Left cardiac atrium (tissue), 4 donors: ENCODE measurements at regions of chr2 and their contacts with region 1.

Region 1: DNA sequence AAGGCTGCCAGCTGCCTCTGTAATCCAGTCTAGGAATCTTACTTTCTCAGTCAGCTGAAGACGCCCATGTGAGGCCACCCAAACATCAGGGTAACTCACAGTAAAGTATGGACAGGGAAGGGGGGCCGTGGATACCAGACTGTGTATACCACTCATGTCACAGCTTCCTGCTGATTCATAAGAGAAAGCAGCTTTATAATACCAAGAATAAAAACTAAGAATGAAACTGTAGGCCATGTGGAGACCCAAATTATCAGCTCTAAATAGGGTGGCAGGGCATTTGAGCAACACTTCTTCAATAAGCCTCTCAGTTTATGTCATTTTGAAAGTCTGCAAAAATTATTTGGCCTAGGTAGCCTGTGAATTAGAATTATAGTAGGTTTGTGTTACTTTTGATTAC is 115.0 kb upstream of the CDCA7 start:
- DNase-seq: no peak
- ATAC-seq: no peak

Region 2: DNA sequence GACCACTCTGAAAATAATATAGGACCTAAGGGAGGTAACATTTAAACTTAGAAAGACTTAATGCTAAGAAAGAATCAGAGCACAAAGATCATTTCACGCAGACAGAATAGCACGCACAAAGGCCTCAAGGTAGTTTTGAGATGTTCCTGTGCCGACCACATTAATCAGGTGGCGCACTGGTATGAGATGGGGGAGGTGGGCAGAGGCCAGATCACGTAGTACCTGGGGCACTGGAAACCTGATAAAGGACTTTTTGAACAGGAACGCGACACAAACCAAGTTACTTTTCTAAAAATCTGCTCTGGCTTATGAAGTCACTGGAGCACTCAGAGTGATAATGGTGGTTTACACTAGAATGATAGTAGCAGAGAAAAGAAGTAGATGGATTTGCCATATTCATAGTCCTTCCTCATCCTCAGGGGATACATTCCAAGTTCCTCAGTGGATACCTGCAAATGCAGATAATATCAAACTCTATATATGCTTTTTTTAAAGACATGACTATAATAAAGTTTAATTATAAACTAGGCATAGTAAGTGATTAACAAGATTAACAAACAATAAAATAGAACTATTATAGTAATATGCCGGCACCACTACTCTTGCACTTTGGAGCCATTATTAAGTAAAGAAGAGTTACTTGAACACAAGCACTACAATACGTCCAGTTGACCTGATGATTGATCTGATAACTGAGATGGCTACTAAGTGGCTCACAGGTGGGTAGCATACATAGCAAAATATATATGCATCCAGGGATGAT is 72.4 kb after region 1 on chr2:
- intact Hi-C with region 1: no loop called
- DNase-seq: no peak
- ATAC-seq: no peak

Region 3: GRCh38 chr2:173354601-173355131 is 115.0 kb after region 1 on chr2 and contains the start of gene CDCA7:
- intact Hi-C with region 1: loop called in 1 of 2 experiments (anchors 10 kb)
- DNase-seq: peak; percentile 52
- ATAC-seq: peak; percentile 92 to 93
- total RNA-seq, gene CDCA7: 0.29 to 0.97 TPM